B cell (primary cell): ENCODE measurements at regions of chr5 and their contacts with region 1.

Region 1: GRCh38 chr5:34838785-34839714 is at the start of gene TTC23L:
- DNase-seq: peak; percentile 98
- ATAC-seq: peak; percentile 86
- H3K4me3 ChIP-seq: peak within 1 kb of the TSS; percentile 73 to 83 (median 76)
- H3K4me3 Mint-ChIP-seq: peak within 1 kb of the TSS; percentile 98
- H3K27ac ChIP-seq: peak within 1 kb of the TSS; percentile 83 to 94
- H3K27ac Mint-ChIP-seq: peak within 1 kb of the TSS; percentile 97
- H3K4me1 ChIP-seq: peaks cover 3 to 11% of the 10 kb centered on the region in 2 donors
- H3K4me1 Mint-ChIP-seq: peaks cover 17% of the 10 kb centered on the region
- H3K27me3 ChIP-seq: peaks cover 0 to 3% (median 0%) of the 10 kb centered on the region in 4 experiments
- H3K27me3 Mint-ChIP-seq: no peaks in the 10 kb centered on the region
- CTCF ChIP-seq: no peak
- total RNA-seq, gene TTC23L: 0.15 and 1.4 TPM in 2 replicates

Region 2: GRCh38 chr5:34656001-34656699 is 182.9 kb before region 1 on chr5 and contains the start of gene RAI14:
- CTCF ChIA-PET with region 1: no interaction called
- POLR2A ChIA-PET with region 1: interaction called, 3 read pairs
- intact Hi-C with region 1: loop called (anchors 5 kb)
- DNase-seq: peak; percentile 36
- ATAC-seq: peak; percentile 37
- H3K4me3 ChIP-seq: peak within 1 kb of the TSS; percentile 40 to 77 (median 59)
- H3K4me3 Mint-ChIP-seq: peak within 1 kb of the TSS; percentile 92
- H3K27ac ChIP-seq: no peak within 1 kb of the TSS
- H3K27ac Mint-ChIP-seq: peak within 1 kb of the TSS; percentile 57
- H3K4me1 ChIP-seq: peaks cover 14 to 20% of the 10 kb centered on the region in 2 donors
- H3K4me1 Mint-ChIP-seq: peaks cover 24% of the 10 kb centered on the region
- H3K27me3 ChIP-seq: peaks cover 0 to 29% (median 12%) of the 10 kb centered on the region in 4 experiments
- H3K27me3 Mint-ChIP-seq: peaks cover 55% of the 10 kb centered on the region
- CTCF ChIP-seq: no peak
- total RNA-seq, gene RAI14: 0.66 and 1.9 TPM in 2 replicates

Region 3: DNA sequence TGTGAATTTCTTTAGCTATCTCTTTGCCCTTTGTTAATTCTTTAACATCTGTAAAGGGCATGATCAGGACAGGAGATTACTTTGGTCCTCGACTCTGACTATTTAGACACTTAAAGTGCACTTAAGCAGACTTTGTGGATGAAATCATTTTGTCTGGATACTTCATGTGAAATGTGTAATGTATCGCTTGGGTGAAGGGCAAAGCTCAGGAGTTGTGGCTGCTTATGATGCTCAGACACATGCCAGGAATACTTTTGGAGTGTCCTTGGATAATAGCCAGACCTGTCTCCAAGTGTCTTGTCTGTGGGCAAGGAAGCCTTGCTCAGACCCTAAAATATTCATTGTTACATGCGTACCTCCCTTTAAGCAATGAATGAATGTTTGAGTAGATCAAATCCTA is 95.2 kb before region 1 on chr5:
- CTCF ChIA-PET with region 1: no interaction called
- POLR2A ChIA-PET with region 1: no interaction called
- intact Hi-C with region 1: loop called (anchors 1 kb)
- DNase-seq: no peak
- ATAC-seq: no peak
- H3K4me3 ChIP-seq: no peak overlapping the region
- H3K4me3 Mint-ChIP-seq: no peak overlapping the region
- H3K27ac ChIP-seq: peak overlapping the region in 1 of 2 donors; percentile 78
- H3K27ac Mint-ChIP-seq: no peak overlapping the region
- H3K4me1 ChIP-seq: peaks cover 19 to 26% of the 10 kb centered on the region in 2 donors
- H3K4me1 Mint-ChIP-seq: peaks cover 47% of the 10 kb centered on the region
- H3K27me3 ChIP-seq: no peaks in the 10 kb centered on the region
- H3K27me3 Mint-ChIP-seq: no peaks in the 10 kb centered on the region
- CTCF ChIP-seq: no peak

Region 4: GRCh38 chr5:34859253-34859652 is 20.2 kb after region 1 on chr5:
- CTCF ChIA-PET with region 1: no interaction called
- POLR2A ChIA-PET with region 1: no interaction called
- intact Hi-C with region 1: no loop called
- DNase-seq: no peak
- ATAC-seq: no peak
- H3K4me3 ChIP-seq: no peak overlapping the region
- H3K4me3 Mint-ChIP-seq: no peak overlapping the region
- H3K27ac ChIP-seq: no peak overlapping the region
- H3K27ac Mint-ChIP-seq: no peak overlapping the region
- H3K4me1 ChIP-seq: peaks cover 0 to 5% of the 10 kb centered on the region in 2 donors
- H3K4me1 Mint-ChIP-seq: peaks cover 6% of the 10 kb centered on the region
- H3K27me3 ChIP-seq: no peaks in the 10 kb centered on the region
- H3K27me3 Mint-ChIP-seq: no peaks in the 10 kb centered on the region
- CTCF ChIP-seq: no peak

Region 5: GRCh38 chr5:34898258-34898895 is 59.3 kb after region 1 on chr5:
- CTCF ChIA-PET with region 1: interaction called, 10 read pairs
- POLR2A ChIA-PET with region 1: no interaction called
- intact Hi-C with region 1: no loop called
- DNase-seq: peak; percentile 73
- ATAC-seq: peak; percentile 73
- H3K4me3 ChIP-seq: no peak overlapping the region
- H3K4me3 Mint-ChIP-seq: no peak overlapping the region
- H3K27ac ChIP-seq: no peak overlapping the region
- H3K27ac Mint-ChIP-seq: no peak overlapping the region
- H3K4me1 ChIP-seq: no peaks in the 10 kb centered on the region
- H3K4me1 Mint-ChIP-seq: no peaks in the 10 kb centered on the region
- H3K27me3 ChIP-seq: no peaks in the 10 kb centered on the region
- H3K27me3 Mint-ChIP-seq: no peaks in the 10 kb centered on the region
- CTCF ChIP-seq: peak; percentile 92

Region 6: GRCh38 chr5:34915139-34915855 is 76.2 kb after region 1 on chr5 and contains the starts of genes BRIX1 and RAD1:
- CTCF ChIA-PET with region 1: no interaction called
- POLR2A ChIA-PET with region 1: interaction called, 7 read pairs
- intact Hi-C with region 1: loop called (anchors 1 kb)
- DNase-seq: peak; percentile 97
- ATAC-seq: peak; percentile 99
- H3K4me3 ChIP-seq: peak within 1 kb of the TSS; percentile 82 to 99 (median 87)
- H3K4me3 Mint-ChIP-seq: no peak within 1 kb of the TSS
- H3K27ac ChIP-seq: peak within 1 kb of the TSS; percentile 57 to 80
- H3K27ac Mint-ChIP-seq: peak within 1 kb of the TSS; percentile 63
- H3K4me1 ChIP-seq: peaks cover 23 to 26% of the 10 kb centered on the region in 2 donors
- H3K4me1 Mint-ChIP-seq: peaks cover 32% of the 10 kb centered on the region
- H3K27me3 ChIP-seq: no peaks in the 10 kb centered on the region
- H3K27me3 Mint-ChIP-seq: no peaks in the 10 kb centered on the region
- CTCF ChIP-seq: no peak
- total RNA-seq, gene BRIX1: 26.4 and 29.3 TPM in 2 replicates
- total RNA-seq, gene RAD1: 25.9 and 26.1 TPM in 2 replicates

Region 7: DNA sequence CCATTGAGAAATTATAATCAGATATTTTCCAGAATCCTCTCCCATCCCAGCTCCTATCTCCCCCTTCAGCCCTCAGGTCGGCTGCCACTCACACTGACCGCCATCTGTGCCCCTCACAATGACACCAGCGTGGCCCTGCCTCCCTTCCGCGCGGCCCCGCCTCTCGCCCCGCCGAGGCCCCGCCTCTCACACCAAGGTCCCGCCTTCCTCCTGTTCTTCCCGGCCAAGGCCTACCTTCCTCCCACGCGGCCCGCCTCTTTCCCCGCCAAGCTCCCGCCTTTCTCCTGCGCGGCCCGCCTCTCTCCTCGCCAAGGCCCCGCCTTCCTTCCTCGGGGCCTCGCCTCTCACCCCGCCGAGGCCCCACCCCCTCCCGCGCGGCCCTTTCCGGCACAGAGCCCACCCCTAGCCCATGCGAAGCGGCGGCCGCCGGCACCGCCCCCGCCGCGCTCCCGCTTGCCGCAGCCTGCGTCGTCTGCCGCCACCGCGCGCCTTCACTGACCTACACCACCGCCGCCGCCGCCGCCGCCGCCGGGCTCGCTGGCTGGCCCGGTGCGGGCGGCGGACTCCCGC is 90.2 kb after region 1 on chr5 and contains the start of gene DNAJC21:
- CTCF ChIA-PET with region 1: interaction called, 5 read pairs
- POLR2A ChIA-PET with region 1: no interaction called
- intact Hi-C with region 1: loop called (anchors 1 kb)
- DNase-seq: peak; percentile 99
- ATAC-seq: peak; percentile 89
- H3K4me3 ChIP-seq: peak within 1 kb of the TSS; percentile 60 to 88 (median 73)
- H3K4me3 Mint-ChIP-seq: peak within 1 kb of the TSS; percentile 96
- H3K27ac ChIP-seq: peak within 1 kb of the TSS; percentile 67 to 94
- H3K27ac Mint-ChIP-seq: peak within 1 kb of the TSS; percentile 94
- H3K4me1 ChIP-seq: peaks cover 15 to 20% of the 10 kb centered on the region in 2 donors
- H3K4me1 Mint-ChIP-seq: peaks cover 26% of the 10 kb centered on the region
- H3K27me3 ChIP-seq: no peaks in the 10 kb centered on the region
- H3K27me3 Mint-ChIP-seq: no peaks in the 10 kb centered on the region
- CTCF ChIP-seq: no peak
- total RNA-seq, gene DNAJC21: 58.3 and 59.3 TPM in 2 replicates

Region 8: DNA sequence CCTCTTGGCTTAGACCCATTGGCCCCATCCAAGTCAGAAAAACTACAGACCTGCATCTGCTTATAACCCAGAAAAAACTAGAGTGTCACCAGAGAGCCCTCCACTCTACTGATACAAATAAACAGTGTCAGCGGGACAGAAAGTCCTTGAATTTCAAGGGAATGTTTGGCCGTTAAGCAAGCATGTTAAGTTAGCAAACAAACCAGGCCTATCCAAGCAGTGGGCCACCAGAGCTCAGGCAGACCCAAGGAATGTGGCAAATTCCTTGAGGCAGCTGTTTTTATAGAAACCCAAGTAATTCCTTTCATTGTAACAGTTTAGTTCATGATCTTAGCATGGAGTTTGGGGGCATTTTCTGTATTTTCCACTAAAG is 320.3 kb after region 1 on chr5:
- CTCF ChIA-PET with region 1: no interaction called
- POLR2A ChIA-PET with region 1: no interaction called
- intact Hi-C with region 1: no loop called
- DNase-seq: no peak
- ATAC-seq: no peak
- H3K4me3 ChIP-seq: no peak overlapping the region
- H3K4me3 Mint-ChIP-seq: no peak overlapping the region
- H3K27ac ChIP-seq: no peak overlapping the region
- H3K27ac Mint-ChIP-seq: no peak overlapping the region
- H3K4me1 ChIP-seq: no peaks in the 10 kb centered on the region
- H3K4me1 Mint-ChIP-seq: no peaks in the 10 kb centered on the region
- H3K27me3 ChIP-seq: no peaks in the 10 kb centered on the region
- H3K27me3 Mint-ChIP-seq: peaks cover 13% of the 10 kb centered on the region
- CTCF ChIP-seq: no peak

Region 9: DNA sequence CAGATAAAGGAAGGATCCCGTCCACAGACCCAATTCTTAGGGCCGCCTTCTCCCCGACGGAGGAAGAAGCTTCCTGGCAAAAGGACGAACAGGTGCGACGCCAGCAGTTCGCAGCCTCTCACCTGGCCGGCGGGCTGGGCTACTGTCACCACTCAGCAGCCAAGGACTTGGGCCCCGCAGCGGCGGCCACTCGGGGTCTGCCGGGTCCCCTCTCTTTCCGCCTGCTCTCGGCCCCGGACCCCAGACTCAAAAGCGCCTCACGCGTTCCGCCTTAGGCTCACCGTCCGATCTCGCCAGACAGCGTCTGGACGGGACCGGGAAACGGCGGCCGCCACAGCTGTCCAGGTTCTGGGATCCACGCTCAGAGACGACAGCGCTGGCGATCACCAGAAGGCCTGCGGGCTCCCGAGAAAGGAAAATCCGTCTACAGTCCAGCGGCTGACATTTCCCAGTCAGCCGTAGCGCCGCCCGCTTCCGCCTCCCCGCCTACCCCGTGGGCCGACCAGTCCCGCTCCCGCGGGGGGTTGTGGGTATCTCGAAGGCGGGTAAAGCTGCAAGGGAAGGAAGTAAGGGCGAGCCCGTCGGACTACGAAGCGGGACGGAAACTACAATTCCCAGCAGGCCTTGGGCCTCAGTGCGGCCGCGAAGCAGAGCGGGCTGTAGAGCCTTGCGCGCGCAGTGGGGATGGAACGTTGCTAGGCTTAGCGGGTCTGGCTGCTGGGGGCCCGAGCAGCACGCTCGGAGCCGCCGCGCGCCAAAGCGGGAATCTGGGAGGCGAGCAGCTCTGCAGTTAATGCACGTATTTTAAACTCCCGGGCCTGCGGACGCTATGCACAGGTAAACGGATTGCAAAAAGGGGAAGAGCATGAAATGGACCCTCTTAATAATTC is 1312.6 kb after region 1 on chr5 and contains the starts of genes LMBRD2 and SKP2:
- CTCF ChIA-PET with region 1: no interaction called
- POLR2A ChIA-PET with region 1: no interaction called
- intact Hi-C with region 1: loop called (anchors 2 kb)
- DNase-seq: peak; percentile 96
- ATAC-seq: peak; percentile 98
- H3K4me3 ChIP-seq: peak within 1 kb of the TSS; percentile 67 to 82 (median 78)
- H3K4me3 Mint-ChIP-seq: peak within 1 kb of the TSS; percentile 95
- H3K27ac ChIP-seq: peak within 1 kb of the TSS; percentile 55 to 83
- H3K27ac Mint-ChIP-seq: peak within 1 kb of the TSS; percentile 87
- H3K4me1 ChIP-seq: peaks cover 19 to 25% of the 10 kb centered on the region in 2 donors
- H3K4me1 Mint-ChIP-seq: peaks cover 46% of the 10 kb centered on the region
- H3K27me3 ChIP-seq: no peaks in the 10 kb centered on the region
- H3K27me3 Mint-ChIP-seq: no peaks in the 10 kb centered on the region
- CTCF ChIP-seq: no peak
- total RNA-seq, gene LMBRD2: 9.9 and 10.0 TPM in 2 replicates
- total RNA-seq, gene SKP2: 26.7 and 33.0 TPM in 2 replicates